PC-3 (cell line): ENCODE measurements at regions of chr10 and their contacts with region 1.

Region 1: GRCh38 chr10:44932517-44933450 is 21.6 kb downstream of the TMEM72 start:
- DNase-seq: peak; percentile 91
- ATAC-seq: peak; percentile 99
- H3K4me3 ChIP-seq: no peak overlapping the region
- H3K27ac ChIP-seq: no peak overlapping the region
- H3K4me1 ChIP-seq: no peaks in the 10 kb centered on the region
- H3K27me3 ChIP-seq: 0 out of 2 replicates have a peak, but pooled peaks cover 5% of the 10 kb centered on the region
- CTCF ChIP-seq: peak; percentile 99

Region 2: DNA sequence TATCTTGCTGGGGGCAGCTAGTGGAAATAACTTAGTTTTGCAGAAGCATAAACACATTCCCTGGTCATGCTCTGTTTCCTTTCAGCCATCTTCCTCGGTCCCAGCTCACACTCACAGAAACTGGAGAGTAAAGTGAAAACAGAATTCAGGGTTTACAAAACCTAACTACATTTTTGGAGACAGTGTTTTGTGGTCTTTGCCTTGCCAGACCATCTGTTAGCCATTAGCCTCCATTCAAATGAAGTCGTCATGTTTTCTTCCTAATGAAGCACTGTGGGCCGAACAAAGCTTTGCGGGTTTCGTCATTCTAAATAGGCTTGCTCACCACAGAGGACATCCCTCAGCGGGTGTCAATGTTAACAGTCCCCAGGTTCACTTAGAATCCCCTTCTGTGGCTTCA is 236.3 kb before region 1 on chr10:
- CTCF ChIA-PET with region 1: no interaction called
- POLR2A ChIA-PET with region 1: no interaction called
- intact Hi-C with region 1: no loop called
- DNase-seq: no peak
- ATAC-seq: no peak
- H3K4me3 ChIP-seq: no peak overlapping the region
- H3K27ac ChIP-seq: no peak overlapping the region
- H3K4me1 ChIP-seq: no peaks in the 10 kb centered on the region
- H3K27me3 ChIP-seq: no peaks in the 10 kb centered on the region
- CTCF ChIP-seq: no peak

Region 3: GRCh38 chr10:44959247-44960087 is 26.7 kb after region 1 on chr10 and contains the start of gene RASSF4:
- CTCF ChIA-PET with region 1: no interaction called
- POLR2A ChIA-PET with region 1: no interaction called
- intact Hi-C with region 1: loop called (anchors 2 kb)
- DNase-seq: peak; percentile 91
- ATAC-seq: peak; percentile 98
- H3K4me3 ChIP-seq: peak within 1 kb of the TSS; percentile 80
- H3K27ac ChIP-seq: peak within 1 kb of the TSS; percentile 43
- H3K4me1 ChIP-seq: peaks cover 19% of the 10 kb centered on the region
- H3K27me3 ChIP-seq: no peaks in the 10 kb centered on the region
- CTCF ChIP-seq: no peak
- total RNA-seq, gene RASSF4: 7.7 and 8.7 TPM in 2 replicates

Region 4: GRCh38 chr10:44974628-44975431 is 42.0 kb after region 1 on chr10:
- CTCF ChIA-PET with region 1: interaction called, 3 read pairs
- POLR2A ChIA-PET with region 1: no interaction called
- intact Hi-C with region 1: loop called (anchors 1 kb)
- DNase-seq: peak; percentile 74
- ATAC-seq: peak; percentile 79
- H3K4me3 ChIP-seq: peak overlapping the region; percentile 91
- H3K27ac ChIP-seq: peak overlapping the region; percentile 28
- H3K4me1 ChIP-seq: peaks cover 47% of the 10 kb centered on the region
- H3K27me3 ChIP-seq: no peaks in the 10 kb centered on the region
- CTCF ChIP-seq: peak; percentile 98

Region 5: GRCh38 chr10:45204954-45205775 is 272.4 kb after region 1 on chr10:
- CTCF ChIA-PET with region 1: no interaction called
- POLR2A ChIA-PET with region 1: no interaction called
- intact Hi-C with region 1: loop called (anchors 5 kb)
- DNase-seq: no peak
- ATAC-seq: no peak
- H3K4me3 ChIP-seq: no peak overlapping the region
- H3K27ac ChIP-seq: no peak overlapping the region
- H3K4me1 ChIP-seq: no peaks in the 10 kb centered on the region
- H3K27me3 ChIP-seq: peaks cover 87% of the 10 kb centered on the region
- CTCF ChIP-seq: no peak